ENCODE measurements at regions of chr12 and their contacts with region 1.

Region 1: DNA sequence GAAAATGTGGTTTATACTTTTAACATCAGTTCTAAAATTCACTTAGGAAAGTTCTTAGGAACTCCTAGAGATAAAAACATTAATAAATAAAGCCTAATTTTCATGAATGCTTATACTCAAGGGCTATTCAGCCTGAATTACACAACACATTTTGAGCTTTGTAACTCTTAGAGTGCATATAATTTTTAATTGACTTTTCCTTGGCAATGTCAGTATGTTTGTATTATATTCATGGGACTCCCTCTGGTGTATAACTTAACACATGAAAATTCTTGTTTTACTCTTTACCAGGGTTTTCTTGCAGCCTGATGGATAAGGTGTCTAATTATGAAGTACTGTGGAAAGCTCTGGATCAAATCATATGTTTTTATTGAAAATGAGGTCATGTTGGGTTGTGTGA is 150.6 kb upstream of the HMGA2 start:
- DNase-seq: no peak
- H3K4me3 ChIP-seq: no peak overlapping the region
- H3K27ac ChIP-seq: peak overlapping the region; percentile 98
- H3K4me1 ChIP-seq: peaks cover 55% of the 10 kb centered on the region
- H3K27me3 ChIP-seq: no peaks in the 10 kb centered on the region
- CTCF ChIP-seq: peak in 1 of 2 donors; percentile 46

Region 2: GRCh38 chr12:65319688-65320200 is 354.0 kb before region 1 on chr12:
- CTCF ChIA-PET with region 1: no interaction called
- dilution Hi-C with region 1: no loop called
- in situ Hi-C with region 1: loop called (anchors 5 to 25 kb)
- intact Hi-C with region 1: no loop called
- DNase-seq: no peak
- H3K4me3 ChIP-seq: no peak overlapping the region
- H3K27ac ChIP-seq: no peak overlapping the region
- H3K4me1 ChIP-seq: no peaks in the 10 kb centered on the region
- H3K27me3 ChIP-seq: no peaks in the 10 kb centered on the region
- CTCF ChIP-seq: no peak

Region 3: GRCh38 chr12:65561798-65562382 is 111.8 kb before region 1 on chr12:
- CTCF ChIA-PET with region 1: no interaction called
- dilution Hi-C with region 1: loop called (anchors 5 kb)
- in situ Hi-C with region 1: no loop called
- intact Hi-C with region 1: no loop called
- DNase-seq: peak; percentile 48
- H3K4me3 ChIP-seq: no peak overlapping the region
- H3K27ac ChIP-seq: no peak overlapping the region
- H3K4me1 ChIP-seq: peaks cover 40% of the 10 kb centered on the region
- H3K27me3 ChIP-seq: no peaks in the 10 kb centered on the region
- CTCF ChIP-seq: no peak

Region 4: DNA sequence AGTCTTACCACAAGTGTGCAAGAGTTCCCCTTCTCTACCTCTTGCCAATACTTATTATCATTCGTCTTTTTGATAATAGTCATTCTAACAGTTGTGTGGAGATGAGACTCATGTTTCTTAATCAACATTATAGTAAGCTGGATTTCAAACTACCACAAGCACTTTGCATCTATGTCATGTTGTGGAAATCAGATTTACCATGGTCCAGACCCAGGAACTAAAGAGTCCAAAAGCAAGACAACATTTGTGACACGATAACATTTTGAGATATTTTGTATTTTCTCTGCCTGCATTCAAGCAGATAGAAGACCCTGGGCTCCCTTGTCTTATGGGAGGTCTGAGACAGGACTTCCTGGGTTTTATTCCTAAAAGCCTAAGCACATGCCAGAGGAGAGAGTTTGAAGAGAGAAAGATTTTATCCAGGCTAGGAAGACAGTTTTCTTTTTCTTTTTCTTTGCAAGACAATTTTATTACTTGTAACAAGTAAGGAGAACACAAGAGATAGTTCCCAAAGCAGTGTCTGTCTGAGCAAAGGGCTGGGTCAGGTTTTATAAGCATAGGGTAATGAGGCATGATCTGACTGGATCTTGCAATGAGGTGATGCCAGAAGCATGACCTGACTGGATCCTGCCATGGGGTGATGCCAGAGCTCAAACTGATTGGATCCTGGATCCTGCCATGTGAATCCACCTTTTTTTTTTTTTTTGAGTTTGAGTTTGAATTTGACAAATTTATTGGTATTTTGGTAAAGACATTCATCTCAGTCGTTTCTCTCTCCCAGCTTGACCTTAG is 29.9 kb before region 1 on chr12:
- CTCF ChIA-PET with region 1: no interaction called
- dilution Hi-C with region 1: no loop called
- in situ Hi-C with region 1: no loop called
- intact Hi-C with region 1: loop called (anchors 1 kb)
- DNase-seq: peak; percentile 93
- H3K4me3 ChIP-seq: no peak overlapping the region
- H3K27ac ChIP-seq: peak overlapping the region; percentile 96
- H3K4me1 ChIP-seq: peaks cover 25% of the 10 kb centered on the region
- H3K27me3 ChIP-seq: no peaks in the 10 kb centered on the region
- CTCF ChIP-seq: no peak

Region 5: GRCh38 chr12:65740873-65741600 is 67.3 kb after region 1 on chr12:
- CTCF ChIA-PET with region 1: no interaction called
- dilution Hi-C with region 1: no loop called
- in situ Hi-C with region 1: no loop called
- intact Hi-C with region 1: no loop called
- DNase-seq: peak; percentile 73
- H3K4me3 ChIP-seq: peak overlapping the region; percentile 54 to 90 (median 77)
- H3K27ac ChIP-seq: peak overlapping the region; percentile 49
- H3K4me1 ChIP-seq: peaks cover 14% of the 10 kb centered on the region
- H3K27me3 ChIP-seq: no peaks in the 10 kb centered on the region
- CTCF ChIP-seq: no peak

Region 6: GRCh38 chr12:65800937-65801336 is 127.2 kb after region 1 on chr12:
- CTCF ChIA-PET with region 1: no interaction called
- dilution Hi-C with region 1: no loop called
- in situ Hi-C with region 1: no loop called
- intact Hi-C with region 1: no loop called
- DNase-seq: no peak
- H3K4me3 ChIP-seq: no peak overlapping the region
- H3K27ac ChIP-seq: no peak overlapping the region
- H3K4me1 ChIP-seq: peaks cover 6% of the 10 kb centered on the region
- H3K27me3 ChIP-seq: no peaks in the 10 kb centered on the region
- CTCF ChIP-seq: no peak

Region 7: GRCh38 chr12:65823513-65824375 is 150.0 kb after region 1 on chr12:
- CTCF ChIA-PET with region 1: no interaction called
- dilution Hi-C with region 1: no loop called
- in situ Hi-C with region 1: no loop called
- intact Hi-C with region 1: loop called (anchors 2 kb)
- DNase-seq: peak; percentile 81
- H3K4me3 ChIP-seq: peak overlapping the region; percentile 70 to 85 (median 80)
- H3K27ac ChIP-seq: peak overlapping the region; percentile 97
- H3K4me1 ChIP-seq: peaks cover 32% of the 10 kb centered on the region
- H3K27me3 ChIP-seq: no peaks in the 10 kb centered on the region
- CTCF ChIP-seq: no peak

Measured in mammary epithelial cell (primary cell).